ENCODE measurements at regions of chr11 and their contacts with region 1.

Region 1: DNA sequence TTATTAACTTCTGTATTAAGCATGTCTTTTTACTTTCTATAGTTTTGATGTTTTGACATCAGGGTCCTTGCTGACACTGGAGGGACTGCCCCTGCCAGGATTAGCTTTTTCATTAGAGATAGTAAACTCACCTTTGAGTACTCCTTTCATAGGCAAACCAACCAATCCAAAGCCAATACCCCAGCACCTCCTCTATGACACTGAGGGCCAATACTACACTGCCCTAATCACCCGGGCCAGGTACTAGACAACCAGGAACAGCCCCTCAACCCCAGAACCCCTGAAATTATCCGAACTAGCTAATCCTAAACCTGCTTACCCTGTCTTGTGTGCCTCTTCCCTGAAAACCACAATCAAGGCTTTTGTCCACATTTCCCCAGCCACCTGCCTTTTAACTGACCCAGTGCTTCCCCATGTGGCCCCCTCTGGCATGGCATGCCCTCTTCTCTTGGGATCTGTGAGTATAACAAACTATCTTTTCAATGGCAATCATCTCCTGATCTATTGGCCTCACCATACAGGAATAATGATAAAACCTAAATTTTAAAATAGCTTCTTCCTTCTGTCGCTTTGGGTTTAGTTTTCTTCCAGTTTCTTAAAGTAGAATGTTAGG is 31.2 kb downstream of the RAB6A start:
- DNase-seq: no peak
- ATAC-seq: no peak
- H3K4me3 ChIP-seq: no peak overlapping the region
- H3K27ac ChIP-seq: no peak overlapping the region
- H3K4me1 ChIP-seq: no peaks in the 10 kb centered on the region
- H3K27me3 ChIP-seq: no peaks in the 10 kb centered on the region
- CTCF ChIP-seq: peak; percentile 28

Region 2: DNA sequence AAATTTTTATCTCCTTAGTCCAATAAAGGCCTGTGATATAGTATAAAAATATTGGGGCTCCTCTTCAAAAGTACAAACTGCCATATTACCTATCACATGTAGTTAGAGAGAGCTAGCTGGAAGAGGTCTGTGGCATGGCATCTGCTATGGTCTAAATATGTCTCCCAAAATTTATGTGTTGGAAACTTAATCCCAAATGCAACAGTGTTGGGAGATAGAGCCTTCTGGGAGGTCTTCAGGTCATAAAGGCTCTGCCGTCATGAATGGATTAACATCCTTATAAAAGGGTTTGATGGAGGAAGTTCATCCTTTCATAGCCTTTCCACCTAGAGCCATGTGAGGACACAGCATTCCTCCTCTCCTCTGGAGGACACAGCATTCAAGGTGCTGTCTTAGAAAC is 248.1 kb before region 1 on chr11:
- intact Hi-C with region 1: no loop called
- DNase-seq: no peak
- ATAC-seq: peak in 1 of 4 donors; percentile 23
- H3K4me3 ChIP-seq: no peak overlapping the region
- H3K27ac ChIP-seq: no peak overlapping the region
- H3K4me1 ChIP-seq: peaks cover 14% of the 10 kb centered on the region
- H3K27me3 ChIP-seq: no peaks in the 10 kb centered on the region
- CTCF ChIP-seq: no peak

Region 3: DNA sequence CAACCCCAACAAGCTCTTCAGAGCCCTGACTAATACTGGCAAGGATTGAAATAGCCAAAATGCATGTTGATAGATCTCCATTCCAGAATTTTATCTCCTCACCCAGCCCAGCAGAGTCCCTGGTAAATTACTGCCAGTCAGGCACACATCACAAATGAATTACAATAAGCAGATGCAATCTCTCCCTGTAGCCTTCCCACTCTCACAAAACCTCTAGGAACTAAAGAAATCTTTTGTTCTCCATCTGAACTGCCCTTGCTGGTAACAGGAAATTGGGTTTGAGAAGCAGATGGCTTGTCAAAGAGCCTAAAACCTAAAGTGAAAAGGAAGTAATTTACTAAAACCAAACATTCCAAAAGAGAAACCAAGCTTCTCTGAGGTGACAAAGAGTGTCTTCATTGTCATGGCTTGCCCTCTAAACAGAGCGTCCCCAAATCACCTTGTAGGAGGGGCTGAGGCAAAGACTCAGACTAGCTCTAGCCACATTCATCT is 191.3 kb before region 1 on chr11:
- intact Hi-C with region 1: no loop called
- DNase-seq: no peak
- ATAC-seq: no peak
- H3K4me3 ChIP-seq: no peak overlapping the region
- H3K27ac ChIP-seq: no peak overlapping the region
- H3K4me1 ChIP-seq: peaks cover 9% of the 10 kb centered on the region
- H3K27me3 ChIP-seq: no peaks in the 10 kb centered on the region
- CTCF ChIP-seq: no peak

Region 4: GRCh38 chr11:73693899-73694525 is 35.7 kb before region 1 on chr11:
- intact Hi-C with region 1: loop called in 1 of 2 experiments (anchors 2 kb)
- DNase-seq: no peak
- ATAC-seq: no peak
- H3K4me3 ChIP-seq: no peak overlapping the region
- H3K27ac ChIP-seq: no peak overlapping the region
- H3K4me1 ChIP-seq: no peaks in the 10 kb centered on the region
- H3K27me3 ChIP-seq: no peaks in the 10 kb centered on the region
- CTCF ChIP-seq: no peak